ENCODE measurements at regions of chr5 and their contacts with region 1.

Region 1: DNA sequence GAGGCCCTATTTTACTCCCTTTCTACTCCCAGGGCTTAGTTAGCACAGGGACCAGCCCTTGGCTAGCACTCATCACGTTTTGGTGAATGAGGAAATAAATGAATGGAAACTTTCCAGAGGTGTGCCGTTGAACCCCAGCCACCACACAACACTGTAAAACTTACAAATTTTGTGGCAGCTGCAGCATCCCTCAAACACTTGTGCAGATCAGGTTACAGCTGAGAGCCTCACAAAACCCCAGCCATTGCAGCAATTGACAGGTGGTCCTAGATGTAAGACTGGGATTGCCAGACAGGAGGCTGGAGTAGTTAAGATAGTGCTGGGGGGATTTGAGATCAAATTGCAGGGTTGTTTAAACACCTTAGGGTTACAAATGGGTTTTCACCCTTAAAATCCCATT is 482.2 kb upstream of the KIF2A start:
- DNase-seq: no peak

Region 2: GRCh38 chr5:60960591-60960990 is 863.2 kb before region 1 on chr5:
- intact Hi-C with region 1: loop called (anchors 10 kb)
- DNase-seq: no peak

Region 3: DNA sequence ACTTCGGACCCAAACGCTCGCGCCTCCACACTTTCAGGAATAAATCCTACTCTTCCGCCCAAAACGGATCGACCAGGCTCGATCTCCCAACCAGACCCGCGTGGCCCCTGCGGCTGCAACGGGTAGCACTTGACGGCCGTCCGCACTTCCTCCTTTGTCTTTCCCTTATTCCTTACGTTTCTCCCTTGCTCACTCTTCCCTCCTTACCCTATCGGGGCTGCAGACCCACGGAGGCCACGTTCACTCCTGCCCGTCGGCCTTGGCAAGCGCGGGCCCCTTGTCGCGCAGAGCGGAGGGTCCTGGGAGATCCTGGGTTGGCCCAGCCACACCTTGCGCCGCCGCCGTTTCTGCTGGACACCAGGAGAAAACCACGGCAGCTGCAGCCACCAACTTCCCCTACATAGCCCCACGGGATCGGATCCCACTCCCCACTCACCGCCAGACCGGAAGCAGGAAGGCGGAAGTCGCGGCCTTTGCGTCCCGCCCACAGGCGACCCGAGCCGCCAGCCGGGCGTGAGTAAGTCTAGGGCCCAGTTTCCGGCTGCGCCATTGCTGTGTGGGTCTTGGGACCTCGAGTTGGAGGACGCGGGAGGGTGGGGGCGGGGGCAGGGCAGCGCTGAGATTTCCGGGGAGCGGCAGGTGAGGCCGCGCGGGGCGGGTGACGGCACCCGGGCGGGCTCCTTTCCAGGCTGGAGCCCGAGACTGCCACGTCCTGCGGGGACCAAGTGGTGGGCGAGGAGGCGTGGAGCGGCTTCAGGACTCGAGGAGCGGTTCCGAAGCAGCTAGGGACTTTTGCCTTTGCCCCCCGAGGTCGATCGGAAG is 661.6 kb before region 1 on chr5 and contains the start of gene SMIM15:
- intact Hi-C with region 1: no loop called
- DNase-seq: peak; percentile 75 to 98 (median 84)

Region 4: GRCh38 chr5:62144401-62145022 is 320.7 kb after region 1 on chr5:
- intact Hi-C with region 1: no loop called
- DNase-seq: peak in 3 of 10 donors; percentile 24 to 31 (median 28)